Naive thymus-derived CD4-positive, alpha-beta T cell (primary cell): ENCODE measurements at regions of chr11 and their contacts with region 1.

Region 1: GRCh38 chr11:6315811-6316425 is 4.4 kb downstream of the CAVIN3 start:
- DNase-seq: peak in 5 of 9 donors; percentile 7 to 38 (median 10)
- ATAC-seq: peak; percentile 77
- H3K4me3 ChIP-seq: no peak overlapping the region
- H3K4me3 Mint-ChIP-seq: no peak overlapping the region
- H3K27ac ChIP-seq: no peak overlapping the region
- H3K27ac Mint-ChIP-seq: no peak overlapping the region
- H3K4me1 ChIP-seq: no peaks in the 10 kb centered on the region
- H3K4me1 Mint-ChIP-seq: peaks cover 0 to 22% (median 10%) of the 10 kb centered on the region in 7 donors
- H3K27me3 ChIP-seq: peaks cover 2 to 4% of the 10 kb centered on the region in 2 donors
- H3K27me3 Mint-ChIP-seq: peaks cover 40 to 57% (median 54%) of the 10 kb centered on the region in 5 donors

Region 2: DNA sequence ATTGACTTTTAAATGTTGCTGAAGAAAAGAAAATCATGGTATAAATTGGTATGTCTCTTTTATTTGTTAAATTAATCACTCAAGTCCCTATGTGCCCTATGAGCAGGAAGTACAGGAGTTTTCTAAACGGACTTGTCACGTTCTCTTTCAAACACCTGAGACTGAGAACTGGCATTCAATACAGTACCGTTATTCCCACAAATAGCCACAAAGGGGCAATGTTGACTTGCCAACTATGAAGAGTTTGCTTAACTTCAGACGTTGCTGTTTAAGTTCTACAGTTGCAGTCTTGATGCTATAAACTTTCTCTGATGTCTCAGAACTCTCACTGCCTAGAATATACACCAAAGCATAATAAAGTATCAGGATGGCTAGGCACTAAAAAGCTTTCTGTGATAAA is 293.0 kb before region 1 on chr11:
- CTCF ChIA-PET with region 1: interaction called, 4 read pairs
- POLR2A ChIA-PET with region 1: no interaction called
- intact Hi-C with region 1: loop called (anchors 1 kb)
- DNase-seq: peak in 5 of 9 donors; percentile 10 to 31 (median 24)
- ATAC-seq: peak; percentile 75
- H3K4me3 ChIP-seq: no peak overlapping the region
- H3K4me3 Mint-ChIP-seq: no peak overlapping the region
- H3K27ac ChIP-seq: no peak overlapping the region
- H3K27ac Mint-ChIP-seq: no peak overlapping the region
- H3K4me1 ChIP-seq: no peaks in the 10 kb centered on the region
- H3K4me1 Mint-ChIP-seq: no peaks in the 10 kb centered on the region
- H3K27me3 ChIP-seq: no peaks in the 10 kb centered on the region
- H3K27me3 Mint-ChIP-seq: peaks cover 30 to 50% (median 35%) of the 10 kb centered on the region in 5 donors

Region 3: GRCh38 chr11:6251120-6251733 is 64.7 kb before region 1 on chr11:
- CTCF ChIA-PET with region 1: interaction called, 3 read pairs
- POLR2A ChIA-PET with region 1: no interaction called
- intact Hi-C with region 1: loop called (anchors 1 to 5 kb)
- DNase-seq: peak in 5 of 9 donors; percentile 21 to 51 (median 27)
- ATAC-seq: peak; percentile 71
- H3K4me3 ChIP-seq: no peak overlapping the region
- H3K4me3 Mint-ChIP-seq: no peak overlapping the region
- H3K27ac ChIP-seq: no peak overlapping the region
- H3K27ac Mint-ChIP-seq: no peak overlapping the region
- H3K4me1 ChIP-seq: no peaks in the 10 kb centered on the region
- H3K4me1 Mint-ChIP-seq: no peaks in the 10 kb centered on the region
- H3K27me3 ChIP-seq: no peaks in the 10 kb centered on the region
- H3K27me3 Mint-ChIP-seq: peaks cover 0 to 17% (median 0%) of the 10 kb centered on the region in 5 donors